Activated CD4-positive, alpha-beta memory T cell treated with anti-CD3 and anti-CD28 coated beads for 36 hours (primary cell): ENCODE measurements at regions of chr3 and their contacts with region 1.

Region 1: GRCh38 chr3:9792405-9793160 is at the starts of genes ARPC4 and TADA3:
- DNase-seq: peak; percentile 93
- H3K4me3 Mint-ChIP-seq: peak within 1 kb of the TSS; percentile 99
- H3K27ac Mint-ChIP-seq: peak within 1 kb of the TSS; percentile 99
- H3K4me1 Mint-ChIP-seq: peaks cover 65% of the 10 kb centered on the region
- H3K27me3 Mint-ChIP-seq: no peaks in the 10 kb centered on the region
- total RNA-seq, gene ARPC4: 237 to 240 TPM
- total RNA-seq, gene TADA3: 86.9 to 92.1 TPM

Region 2: DNA sequence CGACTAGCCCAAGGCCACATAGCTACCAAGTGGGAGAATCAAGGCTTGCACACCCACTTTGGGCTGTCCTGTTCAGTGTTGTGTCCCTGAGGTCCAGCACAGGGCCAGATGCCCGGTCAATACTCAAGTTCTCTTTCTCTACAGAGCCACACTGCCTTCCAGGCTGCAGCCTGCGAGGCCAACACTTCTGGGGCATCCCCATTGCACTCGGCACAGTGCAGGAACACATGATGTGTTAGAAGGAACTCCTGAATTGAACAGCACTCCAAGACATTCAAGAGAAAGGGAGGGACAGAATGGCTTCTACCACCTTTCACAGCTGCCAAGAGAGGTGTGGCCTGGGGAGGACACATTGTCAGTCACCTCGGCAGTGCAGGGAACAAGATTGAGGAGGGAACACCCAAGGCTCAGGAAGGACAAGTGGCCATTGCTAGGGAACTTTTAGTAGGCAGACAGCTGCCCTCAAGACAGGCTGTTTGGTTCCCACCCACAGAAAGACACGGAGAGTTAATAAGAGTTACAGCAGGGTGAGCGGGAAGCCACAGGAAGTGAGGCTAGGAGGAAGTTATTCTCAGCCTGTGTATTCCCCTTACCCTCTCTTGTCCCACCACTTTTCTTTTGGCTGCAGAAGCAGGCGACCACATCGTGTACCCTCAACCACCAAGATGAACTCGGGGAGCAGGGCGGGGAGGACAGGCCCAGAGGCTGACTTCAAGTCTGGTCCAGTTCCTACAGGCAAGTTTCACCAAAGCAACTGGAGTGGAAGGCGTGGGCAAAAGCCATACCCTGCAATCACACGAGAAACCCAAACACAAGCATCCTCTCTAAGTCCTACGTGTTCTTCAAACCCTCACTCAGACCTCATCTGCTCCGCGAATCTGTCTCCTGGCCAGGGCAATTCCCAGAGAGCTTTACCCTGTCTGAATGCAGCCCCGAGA is 612.5 kb before region 1 on chr3:
- CTCF ChIA-PET with region 1: no interaction called
- POLR2A ChIA-PET with region 1: no interaction called
- intact Hi-C with region 1: no loop called
- DNase-seq: peak; percentile 24
- H3K4me3 Mint-ChIP-seq: peak overlapping the region; percentile 42
- H3K27ac Mint-ChIP-seq: peak overlapping the region; percentile 60
- H3K4me1 Mint-ChIP-seq: peaks cover 19% of the 10 kb centered on the region
- H3K27me3 Mint-ChIP-seq: no peaks in the 10 kb centered on the region

Region 3: DNA sequence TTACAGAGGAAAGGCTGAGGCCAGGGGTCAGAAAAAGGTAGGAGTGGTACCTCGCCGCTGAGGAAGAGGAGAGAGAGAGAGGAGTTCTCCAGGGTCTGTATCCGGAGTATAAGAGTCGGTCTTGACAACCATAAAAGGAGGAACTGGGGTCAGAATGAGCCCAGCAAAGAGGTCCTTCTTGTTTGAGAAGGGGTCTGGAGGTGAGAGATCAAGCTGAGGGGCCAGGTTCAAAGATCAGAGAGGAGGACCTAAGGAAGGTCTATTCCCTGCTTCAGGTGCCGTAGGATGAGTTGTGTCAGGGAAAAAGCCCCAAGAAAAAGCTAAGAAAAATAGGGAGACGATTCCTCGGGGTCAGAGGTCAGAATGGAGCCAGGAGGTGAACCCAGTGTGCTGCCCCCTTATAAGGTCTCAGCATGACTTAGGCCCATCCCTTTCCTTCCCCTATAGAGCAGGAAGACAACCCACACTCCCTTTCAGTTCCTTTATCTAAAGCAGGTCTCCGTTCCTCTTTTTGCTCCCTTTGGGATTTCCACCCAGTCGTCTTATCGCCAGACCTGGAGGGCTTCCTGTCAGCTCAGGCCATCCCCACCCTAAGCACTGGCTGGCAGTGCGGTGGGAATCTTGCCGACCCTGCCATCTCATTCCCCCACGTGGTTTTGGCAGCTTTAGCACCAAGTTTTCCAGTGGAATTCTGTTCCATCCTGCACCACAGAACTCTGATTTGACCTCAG is 142.6 kb before region 1 on chr3:
- CTCF ChIA-PET with region 1: no interaction called
- POLR2A ChIA-PET with region 1: no interaction called
- intact Hi-C with region 1: loop called (anchors 2 kb)
- DNase-seq: no peak
- H3K4me3 Mint-ChIP-seq: peak overlapping the region; percentile 95
- H3K27ac Mint-ChIP-seq: peak overlapping the region; percentile 73
- H3K4me1 Mint-ChIP-seq: peaks cover 29% of the 10 kb centered on the region
- H3K27me3 Mint-ChIP-seq: no peaks in the 10 kb centered on the region

Region 4: DNA sequence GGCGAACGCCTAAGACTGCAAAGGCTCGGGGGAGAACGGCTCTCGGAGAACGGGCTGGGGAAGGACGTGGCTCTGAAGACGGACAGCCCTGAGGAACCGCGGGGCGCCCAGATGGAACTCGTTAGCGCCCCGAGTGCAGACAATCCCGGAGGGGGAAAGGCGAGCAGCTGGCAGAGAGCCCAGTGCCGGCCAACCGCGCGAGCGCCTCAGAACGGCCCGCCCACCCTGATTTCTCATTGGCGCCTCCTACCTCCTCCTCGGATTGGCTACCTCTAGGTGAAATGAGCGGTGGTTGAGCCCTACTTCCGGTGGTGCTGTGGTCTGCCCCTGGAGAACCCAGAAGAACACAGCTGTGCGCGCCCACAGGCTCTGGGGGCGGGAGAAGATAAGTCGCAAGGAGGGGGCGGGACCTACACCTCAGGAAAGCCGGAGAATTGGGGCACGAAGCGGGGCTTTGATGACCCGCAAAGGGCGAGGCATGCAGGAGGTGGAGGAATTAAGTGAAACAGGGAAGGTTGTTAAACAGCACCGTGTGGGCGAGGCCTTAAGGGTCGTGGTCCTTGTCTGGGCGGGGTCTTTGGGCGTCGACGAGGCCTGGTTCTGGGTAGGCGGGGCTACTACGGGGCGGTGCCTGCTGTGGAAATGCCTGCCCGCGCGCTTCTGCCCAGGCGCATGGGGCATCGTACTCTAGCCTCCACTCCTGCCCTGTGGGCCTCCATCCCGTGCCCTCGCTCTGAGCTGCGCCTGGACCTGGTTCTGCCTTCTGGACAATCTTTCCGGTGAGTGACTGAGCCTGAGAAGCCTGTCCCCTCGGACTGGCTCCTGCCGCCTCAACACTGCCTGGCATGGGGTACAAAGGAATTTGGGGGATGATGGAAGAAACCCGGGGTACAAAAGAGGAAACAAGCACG is 42.7 kb before region 1 on chr3 and contains the start of gene OGG1:
- CTCF ChIA-PET with region 1: interaction called, 4 read pairs
- POLR2A ChIA-PET with region 1: interaction called, 24 read pairs
- intact Hi-C with region 1: loop called (anchors 1 kb)
- DNase-seq: peak; percentile 98
- H3K4me3 Mint-ChIP-seq: peak within 1 kb of the TSS; percentile 96
- H3K27ac Mint-ChIP-seq: peak within 1 kb of the TSS; percentile 88
- H3K4me1 Mint-ChIP-seq: peaks cover 50% of the 10 kb centered on the region
- H3K27me3 Mint-ChIP-seq: no peaks in the 10 kb centered on the region
- total RNA-seq, gene OGG1: 35.7 to 36.5 TPM

Region 5: DNA sequence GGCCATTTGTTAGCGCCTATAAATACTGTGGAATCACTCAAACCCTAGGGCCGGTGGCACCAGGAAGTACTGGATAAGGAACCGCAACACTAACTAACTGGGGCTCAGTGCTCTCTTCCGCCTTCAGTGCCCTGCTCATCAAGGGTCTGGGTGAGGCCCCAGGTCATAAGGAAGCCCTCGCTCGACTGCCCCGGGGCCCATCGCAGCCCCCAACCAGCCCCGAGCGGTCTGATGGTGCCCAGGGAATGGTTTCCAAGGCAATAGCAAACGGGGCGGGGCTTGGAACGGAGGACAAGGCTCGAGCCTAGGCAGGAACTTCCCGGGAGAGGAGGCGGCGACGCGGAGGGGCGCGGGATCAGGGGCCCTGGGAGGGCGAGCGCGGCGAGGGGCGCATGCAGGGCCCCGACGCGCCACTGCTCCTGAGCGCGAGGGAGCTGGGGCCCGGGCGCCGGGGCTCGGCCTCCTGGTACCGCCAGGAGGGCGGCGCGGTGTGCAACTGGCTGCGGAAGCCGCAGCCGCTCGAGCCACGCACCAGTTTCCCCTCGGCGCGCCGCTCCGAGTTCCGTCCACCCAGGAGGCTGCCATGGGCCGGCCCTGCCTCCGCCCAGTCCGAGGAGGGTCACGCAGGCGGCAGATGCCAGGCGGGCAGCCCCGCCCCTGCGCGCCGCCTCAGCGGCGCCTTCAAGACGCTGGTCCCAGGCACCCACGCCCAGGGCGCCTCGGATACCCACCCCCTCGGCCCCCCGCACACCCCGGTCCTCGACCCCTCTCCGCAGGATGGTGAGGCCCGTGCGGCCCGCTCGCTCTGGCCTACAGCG is 17.2 kb after region 1 on chr3 and contains the start of gene TTLL3:
- CTCF ChIA-PET with region 1: interaction called, 4 read pairs
- POLR2A ChIA-PET with region 1: interaction called, 12 read pairs
- intact Hi-C with region 1: loop called (anchors 1 kb)
- DNase-seq: peak; percentile 55
- H3K4me3 Mint-ChIP-seq: peak within 1 kb of the TSS; percentile 81
- H3K27ac Mint-ChIP-seq: peak within 1 kb of the TSS; percentile 83
- H3K4me1 Mint-ChIP-seq: peaks cover 30% of the 10 kb centered on the region
- H3K27me3 Mint-ChIP-seq: no peaks in the 10 kb centered on the region
- total RNA-seq, gene TTLL3: 49.6 to 49.7 TPM

Region 6: DNA sequence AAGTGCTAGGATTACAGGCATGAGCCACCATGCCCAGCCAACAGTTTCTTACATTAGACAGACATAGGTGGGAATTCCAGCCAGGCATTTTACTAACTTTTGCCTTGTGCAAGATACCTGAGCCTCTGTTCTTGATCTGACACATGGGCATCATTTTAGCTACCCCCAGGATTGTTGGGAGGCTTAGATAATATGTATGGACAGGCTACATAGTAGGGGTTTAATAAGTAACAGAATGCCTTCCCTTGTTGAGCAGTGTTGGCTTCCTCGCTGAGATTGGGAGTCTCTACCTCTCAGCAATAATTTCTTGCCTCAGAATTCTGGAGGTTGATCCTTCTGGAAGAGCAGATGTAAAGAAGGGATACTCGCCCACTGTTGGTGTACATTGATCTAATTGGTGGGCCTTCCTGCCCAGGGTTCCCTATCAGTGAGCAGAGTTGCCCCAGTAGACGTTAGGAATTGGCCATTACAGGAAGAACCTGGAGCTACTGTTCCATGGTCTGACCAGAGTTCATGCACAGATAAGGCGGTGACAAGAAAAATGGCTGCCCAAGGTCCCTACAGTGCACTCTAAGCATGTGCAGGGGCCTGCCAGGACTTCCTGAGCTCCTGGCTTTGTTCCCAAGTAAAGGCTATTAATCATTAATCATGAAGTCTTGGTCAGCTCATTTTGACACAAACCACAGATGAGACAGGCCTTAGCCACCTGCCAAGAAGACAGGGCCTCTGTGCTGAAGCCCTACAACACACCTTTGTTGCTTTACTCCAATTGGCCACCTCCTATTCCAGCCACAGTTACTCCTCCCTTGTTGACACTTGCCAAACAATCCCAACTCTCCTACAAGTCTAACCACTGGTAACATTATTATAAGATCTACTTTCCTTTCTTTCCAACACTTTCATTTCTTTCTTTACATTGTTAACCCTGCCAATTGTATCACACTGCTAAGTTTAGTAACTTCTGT is 105.1 kb after region 1 on chr3:
- CTCF ChIA-PET with region 1: no interaction called
- POLR2A ChIA-PET with region 1: no interaction called
- intact Hi-C with region 1: no loop called
- DNase-seq: no peak
- H3K4me3 Mint-ChIP-seq: no peak overlapping the region
- H3K27ac Mint-ChIP-seq: no peak overlapping the region
- H3K4me1 Mint-ChIP-seq: peaks cover 40% of the 10 kb centered on the region
- H3K27me3 Mint-ChIP-seq: no peaks in the 10 kb centered on the region

Region 7: GRCh38 chr3:9915254-9916141 is 122.9 kb after region 1 on chr3:
- CTCF ChIA-PET with region 1: no interaction called
- POLR2A ChIA-PET with region 1: no interaction called
- intact Hi-C with region 1: no loop called
- DNase-seq: peak; percentile 58
- H3K4me3 Mint-ChIP-seq: peak overlapping the region; percentile 65
- H3K27ac Mint-ChIP-seq: no peak overlapping the region
- H3K4me1 Mint-ChIP-seq: peaks cover 23% of the 10 kb centered on the region
- H3K27me3 Mint-ChIP-seq: peaks cover 2% of the 10 kb centered on the region

Region 8: DNA sequence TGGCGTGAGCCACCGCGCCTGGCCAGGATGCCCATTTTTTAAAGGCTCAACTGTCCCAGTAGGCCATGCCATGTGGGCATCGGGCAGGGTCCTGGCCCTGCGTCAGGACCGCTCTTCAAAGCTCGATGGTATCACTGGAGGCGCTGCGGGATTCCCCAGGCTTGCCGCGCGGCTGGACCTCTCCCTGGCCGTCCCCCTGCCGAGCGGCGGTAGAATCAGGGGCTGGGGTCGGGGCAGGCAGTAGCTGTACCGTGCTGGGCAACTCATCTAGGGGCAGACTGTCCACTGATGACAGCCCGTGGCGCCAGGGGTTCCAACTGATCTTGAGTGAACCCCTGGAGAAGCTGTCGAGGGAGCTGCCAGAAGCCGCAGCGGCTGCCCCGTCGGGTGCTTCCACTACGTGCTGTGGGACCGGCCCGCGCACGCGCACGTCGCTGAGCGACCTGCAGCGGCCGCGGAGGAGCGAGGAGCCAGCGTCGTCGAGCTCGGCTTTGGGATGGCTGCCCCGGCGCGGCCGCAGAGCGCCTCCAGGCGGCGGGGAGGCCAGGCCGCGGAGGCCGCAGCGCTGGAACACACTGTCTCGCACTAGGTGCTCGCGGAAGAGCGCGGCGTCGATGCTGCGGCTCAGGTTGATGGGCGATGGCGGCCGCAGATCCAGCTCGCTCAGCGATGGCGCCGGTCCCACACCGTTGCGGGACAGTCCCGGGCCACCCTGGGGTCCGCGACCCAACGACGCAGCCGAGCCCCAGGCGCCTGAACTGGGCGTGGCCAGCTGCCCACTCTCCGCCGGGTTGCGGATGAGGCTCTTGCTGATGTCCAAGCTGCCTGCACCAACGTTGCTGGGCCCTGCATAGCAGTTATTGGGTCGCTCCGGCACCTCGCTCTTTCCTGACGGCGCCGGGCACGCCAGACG is 153.8 kb after region 1 on chr3:
- CTCF ChIA-PET with region 1: interaction called, 14 read pairs
- POLR2A ChIA-PET with region 1: no interaction called
- intact Hi-C with region 1: no loop called
- DNase-seq: peak; percentile 87
- H3K4me3 Mint-ChIP-seq: peak overlapping the region; percentile 78
- H3K27ac Mint-ChIP-seq: peak overlapping the region; percentile 74
- H3K4me1 Mint-ChIP-seq: peaks cover 14% of the 10 kb centered on the region
- H3K27me3 Mint-ChIP-seq: no peaks in the 10 kb centered on the region

Region 9: GRCh38 chr3:10505050-10505790 is 712.6 kb after region 1 on chr3 and contains the start of gene ATP2B2:
- CTCF ChIA-PET with region 1: no interaction called
- POLR2A ChIA-PET with region 1: no interaction called
- intact Hi-C with region 1: no loop called
- DNase-seq: peak; percentile 28
- H3K4me3 Mint-ChIP-seq: no peak within 1 kb of the TSS
- H3K27ac Mint-ChIP-seq: no peak within 1 kb of the TSS
- H3K4me1 Mint-ChIP-seq: peaks cover 3% of the 10 kb centered on the region
- H3K27me3 Mint-ChIP-seq: peaks cover 15% of the 10 kb centered on the region
- total RNA-seq, gene ATP2B2: 0.05 TPM in 1 of 2 experiments, not detected in the other